ENCODE measurements at regions of chr12 and their contacts with region 1.

Region 1: DNA sequence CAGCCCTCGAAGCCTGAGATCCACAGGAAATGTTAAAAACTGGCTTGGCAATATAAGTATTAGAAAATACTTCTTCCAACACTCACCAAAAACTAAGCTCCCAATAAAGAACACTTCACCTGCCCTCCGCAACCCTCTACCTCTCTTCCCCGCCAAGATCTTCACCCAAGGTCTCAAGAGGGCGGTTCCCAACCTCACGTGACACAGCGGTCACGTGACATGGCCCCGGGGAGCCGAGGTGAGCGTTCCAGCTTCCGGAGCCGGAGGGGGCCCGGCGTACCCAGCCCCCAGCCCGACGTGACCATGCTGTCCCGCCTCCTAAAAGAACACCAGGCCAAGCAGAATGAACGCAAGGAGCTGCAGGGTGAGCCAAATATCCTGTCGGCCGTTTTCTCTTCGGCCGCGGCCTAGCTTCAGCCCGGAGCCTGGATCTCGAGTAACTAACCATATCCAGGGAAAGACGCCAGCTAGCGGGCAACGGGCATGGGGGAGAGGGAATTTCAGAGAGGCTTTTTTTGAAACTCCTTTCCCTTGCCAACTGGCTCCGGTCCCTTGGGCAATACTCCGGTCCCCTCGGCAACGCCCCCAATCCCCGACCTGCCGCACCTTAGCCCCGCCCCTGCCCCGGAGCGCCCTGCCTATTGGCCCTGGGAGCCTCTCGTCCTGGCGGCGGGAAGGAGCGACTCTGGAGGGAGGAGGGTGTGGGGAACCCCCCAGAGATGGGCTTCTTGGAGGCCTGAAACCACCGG is at the start of gene BLOC1S1:
- DNase-seq: peak; percentile 97
- ATAC-seq: peak; percentile 94
- H3K4me3 Mint-ChIP-seq: peak within 1 kb of the TSS; percentile 86
- H3K27ac Mint-ChIP-seq: peak within 1 kb of the TSS; percentile 89
- H3K4me1 Mint-ChIP-seq: peaks cover 30% of the 10 kb centered on the region
- H3K27me3 Mint-ChIP-seq: peaks cover 2% of the 10 kb centered on the region
- total RNA-seq, gene BLOC1S1: 107 to 115 TPM

Region 2: GRCh38 chr12:54984658-54985376 is 731.2 kb before region 1 on chr12 and contains the start of gene TESPA1:
- CTCF ChIA-PET with region 1: no interaction called
- POLR2A ChIA-PET with region 1: no interaction called
- intact Hi-C with region 1: loop called in 1 of 2 experiments (anchors 10 kb)
- DNase-seq: peak; percentile 92
- ATAC-seq: peak; percentile 87
- H3K4me3 Mint-ChIP-seq: peak within 1 kb of the TSS; percentile 78
- H3K27ac Mint-ChIP-seq: peak within 1 kb of the TSS; percentile 95
- H3K4me1 Mint-ChIP-seq: peaks cover 64% of the 10 kb centered on the region
- H3K27me3 Mint-ChIP-seq: no peaks in the 10 kb centered on the region
- total RNA-seq, gene TESPA1: 81.0 to 107 TPM

Region 3: GRCh38 chr12:55647027-55647426 is 69.0 kb before region 1 on chr12:
- CTCF ChIA-PET with region 1: interaction called, 10 read pairs
- POLR2A ChIA-PET with region 1: no interaction called
- intact Hi-C with region 1: loop called in 1 of 2 experiments (anchors 2 kb)
- DNase-seq: no peak
- ATAC-seq: no peak
- H3K4me3 Mint-ChIP-seq: no peak overlapping the region
- H3K27ac Mint-ChIP-seq: no peak overlapping the region
- H3K4me1 Mint-ChIP-seq: peaks cover 38% of the 10 kb centered on the region
- H3K27me3 Mint-ChIP-seq: no peaks in the 10 kb centered on the region

Region 4: DNA sequence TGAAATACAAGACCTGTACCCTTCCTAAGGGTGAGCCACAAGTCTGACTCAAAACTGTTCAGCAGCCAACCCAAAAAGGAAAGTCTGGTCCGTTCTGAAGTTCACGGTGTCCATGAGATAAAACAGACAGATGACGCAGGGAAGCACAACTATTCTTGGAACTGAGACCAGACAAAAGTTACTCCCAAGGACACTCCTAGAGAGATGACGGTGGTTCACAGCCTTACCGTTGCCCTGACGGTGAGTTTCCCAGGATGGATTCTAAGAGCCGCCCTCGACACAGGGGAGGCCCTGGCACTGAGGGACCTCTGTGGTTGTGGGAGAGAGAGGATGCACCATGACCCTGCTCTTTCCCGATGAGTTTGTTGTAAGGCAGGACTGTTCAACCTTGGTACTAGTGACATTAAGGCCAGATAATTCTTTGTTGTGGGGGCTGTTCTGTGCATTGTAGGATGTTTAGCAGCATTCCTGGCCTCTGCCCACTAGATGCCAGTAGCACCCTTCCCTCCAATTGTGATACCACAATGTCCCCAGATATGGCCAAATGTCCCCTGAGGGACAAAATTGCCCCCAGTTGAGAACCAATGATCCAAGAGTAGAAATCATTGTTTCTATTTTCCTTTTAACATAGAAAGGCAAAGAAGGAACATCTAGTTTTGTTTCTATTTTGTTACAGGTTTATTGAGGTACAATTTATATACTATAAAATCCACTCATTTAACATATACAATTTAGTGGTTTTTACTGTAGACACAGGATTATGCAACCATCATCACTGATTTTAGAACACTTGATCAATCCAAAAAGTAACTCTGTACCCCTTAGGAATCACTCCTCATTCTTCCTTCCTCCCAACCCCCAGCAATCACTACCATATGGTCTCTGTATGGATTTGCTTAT is 56.3 kb before region 1 on chr12:
- CTCF ChIA-PET with region 1: interaction called, 5 read pairs
- POLR2A ChIA-PET with region 1: no interaction called
- intact Hi-C with region 1: loop called in 1 of 2 experiments (anchors 5 kb)
- DNase-seq: peak; percentile 22
- ATAC-seq: peak; percentile 44
- H3K4me3 Mint-ChIP-seq: no peak overlapping the region
- H3K27ac Mint-ChIP-seq: no peak overlapping the region
- H3K4me1 Mint-ChIP-seq: no peaks in the 10 kb centered on the region
- H3K27me3 Mint-ChIP-seq: peaks cover 2% of the 10 kb centered on the region

Region 5: GRCh38 chr12:55728939-55729823 is 13.2 kb after region 1 on chr12 and contains the start of gene CD63:
- CTCF ChIA-PET with region 1: interaction called, 20 read pairs
- POLR2A ChIA-PET with region 1: no interaction called
- intact Hi-C with region 1: loop called (anchors 1 kb)
- DNase-seq: peak; percentile 89
- ATAC-seq: peak; percentile 73
- H3K4me3 Mint-ChIP-seq: peak within 1 kb of the TSS; percentile 93
- H3K27ac Mint-ChIP-seq: peak within 1 kb of the TSS; percentile 95
- H3K4me1 Mint-ChIP-seq: peaks cover 34% of the 10 kb centered on the region
- H3K27me3 Mint-ChIP-seq: no peaks in the 10 kb centered on the region
- total RNA-seq, gene CD63: 113 to 122 TPM

Region 6: DNA sequence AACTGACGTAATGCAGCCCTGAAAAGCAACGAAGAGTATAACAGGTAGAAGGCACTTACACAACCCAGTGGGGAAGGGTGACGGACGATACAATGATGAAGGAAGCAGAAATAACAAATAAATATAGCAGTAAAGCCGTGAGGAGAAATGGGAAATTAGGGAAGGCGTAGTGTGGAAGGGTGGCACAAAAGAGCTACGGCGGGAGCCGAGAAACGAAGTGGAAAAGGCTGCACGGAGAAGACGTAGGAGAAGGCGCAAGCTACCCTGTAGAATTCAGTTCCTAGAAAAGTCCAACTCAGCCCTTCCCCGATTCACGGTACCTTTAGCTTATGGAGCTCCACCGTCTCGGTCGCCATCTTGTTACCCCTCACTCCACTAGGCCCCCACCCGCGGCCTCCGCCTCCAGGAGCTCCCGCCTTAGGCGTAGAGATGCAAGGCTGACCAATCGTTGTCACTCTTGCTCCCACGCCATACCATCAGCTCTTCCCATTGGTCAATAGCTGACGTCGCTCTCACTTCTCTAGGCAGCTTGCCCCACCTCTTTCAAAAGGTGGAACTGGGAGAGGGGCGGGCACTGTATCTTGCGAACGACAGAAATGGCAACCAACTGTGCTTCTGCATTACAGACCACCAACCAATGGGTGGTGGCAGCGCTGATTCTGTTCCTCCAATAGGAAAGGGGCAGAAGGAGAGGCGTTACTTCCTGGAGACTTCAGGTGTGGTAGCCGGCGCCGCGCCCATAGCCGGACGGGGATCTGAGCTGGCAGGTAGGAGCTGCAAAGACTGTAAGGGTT is 101.5 kb after region 1 on chr12 and contains the starts of genes ORMDL2 and SARNP:
- CTCF ChIA-PET with region 1: interaction called, 3 read pairs
- POLR2A ChIA-PET with region 1: interaction called, 3 read pairs
- intact Hi-C with region 1: loop called in 1 of 2 experiments (anchors 1 kb)
- DNase-seq: peak; percentile 97
- ATAC-seq: peak; percentile 98
- H3K4me3 Mint-ChIP-seq: no peak within 1 kb of the TSS
- H3K27ac Mint-ChIP-seq: no peak within 1 kb of the TSS
- H3K4me1 Mint-ChIP-seq: peaks cover 49% of the 10 kb centered on the region
- H3K27me3 Mint-ChIP-seq: no peaks in the 10 kb centered on the region
- total RNA-seq, gene ORMDL2: 29.4 to 35.6 TPM
- total RNA-seq, gene SARNP: 111 to 114 TPM

Region 7: GRCh38 chr12:56007564-56008559 is 291.9 kb after region 1 on chr12:
- CTCF ChIA-PET with region 1: no interaction called
- POLR2A ChIA-PET with region 1: no interaction called
- intact Hi-C with region 1: loop called in 1 of 2 experiments (anchors 1 kb)
- DNase-seq: peak; percentile 82
- ATAC-seq: peak; percentile 83
- H3K4me3 Mint-ChIP-seq: peak overlapping the region; percentile 78
- H3K27ac Mint-ChIP-seq: peak overlapping the region; percentile 92
- H3K4me1 Mint-ChIP-seq: peaks cover 28% of the 10 kb centered on the region
- H3K27me3 Mint-ChIP-seq: no peaks in the 10 kb centered on the region

Region 8: DNA sequence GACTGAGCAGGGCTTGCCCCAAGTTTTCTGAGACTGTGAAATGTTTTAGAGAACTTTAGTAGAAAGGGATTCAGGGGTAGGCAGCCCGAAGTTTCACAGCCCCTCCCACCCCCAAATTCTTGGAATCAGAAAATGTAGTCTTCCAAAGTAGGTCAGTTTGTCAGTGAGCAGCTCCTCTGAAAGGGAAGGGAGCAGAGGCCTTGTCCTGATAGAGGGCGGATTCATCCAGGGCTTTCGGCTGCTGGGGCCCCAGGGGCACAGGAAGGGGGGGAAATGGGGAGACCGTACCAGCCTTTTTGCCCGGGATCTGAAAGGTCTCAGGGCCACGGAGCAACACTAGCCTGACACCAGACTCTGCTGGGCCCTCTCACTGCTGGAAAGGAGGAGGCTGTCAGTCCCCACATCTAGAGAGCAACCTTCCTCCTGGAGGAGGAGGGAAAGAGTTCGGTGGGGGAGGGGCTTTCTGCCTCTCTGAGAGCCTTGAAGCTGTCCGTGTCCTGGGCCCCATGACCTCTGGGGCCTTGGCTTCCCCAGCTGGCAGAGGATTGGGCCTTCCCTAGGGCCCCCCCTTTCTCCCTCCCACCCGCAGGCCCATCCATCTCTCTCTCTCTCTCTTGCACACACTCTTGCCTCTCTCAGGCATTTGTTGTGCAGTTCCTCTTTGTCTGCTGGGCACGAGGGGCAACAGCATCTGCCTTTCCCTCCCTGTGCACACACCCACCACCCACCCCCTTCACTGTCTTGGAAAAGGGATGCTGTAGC is 304.6 kb after region 1 on chr12 and contains the start of gene IKZF4:
- CTCF ChIA-PET with region 1: no interaction called
- POLR2A ChIA-PET with region 1: no interaction called
- intact Hi-C with region 1: no loop called
- DNase-seq: peak; percentile 60
- ATAC-seq: peak; percentile 48
- H3K4me3 Mint-ChIP-seq: peak within 1 kb of the TSS; percentile 80
- H3K27ac Mint-ChIP-seq: peak within 1 kb of the TSS; percentile 95
- H3K4me1 Mint-ChIP-seq: peaks cover 24% of the 10 kb centered on the region
- H3K27me3 Mint-ChIP-seq: no peaks in the 10 kb centered on the region
- total RNA-seq, gene IKZF4: 14.9 to 16.3 TPM

Measured in activated CD4-positive, alpha-beta T cell treated with anti-CD3 and anti-CD28 coated beads for 36 hours (primary cell).